Activated CD4-positive, alpha-beta memory T cell treated with anti-CD3 and anti-CD28 coated beads for 36 hours (primary cell): ENCODE measurements at regions of chr12 and their contacts with region 1.

Region 1: DNA sequence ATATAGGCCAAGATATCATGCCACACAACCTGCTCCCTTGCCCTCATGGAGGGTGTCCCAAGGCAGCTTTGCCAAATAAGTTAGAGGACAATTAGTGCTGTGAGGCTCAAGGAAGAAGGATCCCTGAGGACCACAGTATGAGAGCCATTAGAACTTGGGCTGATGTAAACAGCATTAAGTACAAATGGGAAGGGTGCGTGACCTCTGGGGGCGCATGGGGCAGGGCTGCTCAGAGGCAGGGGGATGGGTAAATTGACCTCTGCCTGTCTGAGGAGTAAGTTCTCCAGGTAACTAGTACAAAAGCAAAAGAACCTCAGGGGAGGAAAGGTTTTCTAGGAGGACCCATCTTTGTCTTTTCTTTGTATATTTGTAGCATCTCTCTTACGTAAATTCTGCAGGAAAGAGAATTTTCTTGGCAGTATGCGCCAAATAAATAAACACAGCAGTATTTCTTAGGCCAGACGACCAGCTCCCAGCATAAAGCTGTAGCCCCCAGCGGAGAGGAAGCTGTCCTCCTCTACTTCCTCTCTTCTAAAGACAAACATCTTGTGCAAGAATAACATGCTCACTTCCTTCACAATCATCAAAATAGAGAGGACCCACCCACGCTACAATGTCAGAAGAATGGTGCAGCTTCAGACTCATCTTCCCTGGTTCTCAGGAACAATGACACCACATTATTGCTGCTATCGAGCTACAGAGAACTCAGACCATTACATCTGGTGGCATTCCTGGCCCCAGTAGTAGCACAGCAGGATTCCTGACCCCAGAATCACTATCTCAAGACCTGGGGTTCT is 16.4 kb upstream of the VWF start:
- DNase-seq: peak; percentile 57
- H3K4me3 Mint-ChIP-seq: no peak overlapping the region
- H3K27ac Mint-ChIP-seq: peak overlapping the region; percentile 81
- H3K4me1 Mint-ChIP-seq: peaks cover 36% of the 10 kb centered on the region
- H3K27me3 Mint-ChIP-seq: no peaks in the 10 kb centered on the region

Region 2: GRCh38 chr12:6069437-6070107 is 71.3 kb before region 1 on chr12:
- CTCF ChIA-PET with region 1: no interaction called
- POLR2A ChIA-PET with region 1: no interaction called
- intact Hi-C with region 1: loop called (anchors 10 kb)
- DNase-seq: peak; percentile 60
- H3K4me3 Mint-ChIP-seq: no peak overlapping the region
- H3K27ac Mint-ChIP-seq: no peak overlapping the region
- H3K4me1 Mint-ChIP-seq: peaks cover 18% of the 10 kb centered on the region
- H3K27me3 Mint-ChIP-seq: peaks cover 10% of the 10 kb centered on the region